ENCODE measurements at regions of chr3 and their contacts with region 1.

Region 1: DNA sequence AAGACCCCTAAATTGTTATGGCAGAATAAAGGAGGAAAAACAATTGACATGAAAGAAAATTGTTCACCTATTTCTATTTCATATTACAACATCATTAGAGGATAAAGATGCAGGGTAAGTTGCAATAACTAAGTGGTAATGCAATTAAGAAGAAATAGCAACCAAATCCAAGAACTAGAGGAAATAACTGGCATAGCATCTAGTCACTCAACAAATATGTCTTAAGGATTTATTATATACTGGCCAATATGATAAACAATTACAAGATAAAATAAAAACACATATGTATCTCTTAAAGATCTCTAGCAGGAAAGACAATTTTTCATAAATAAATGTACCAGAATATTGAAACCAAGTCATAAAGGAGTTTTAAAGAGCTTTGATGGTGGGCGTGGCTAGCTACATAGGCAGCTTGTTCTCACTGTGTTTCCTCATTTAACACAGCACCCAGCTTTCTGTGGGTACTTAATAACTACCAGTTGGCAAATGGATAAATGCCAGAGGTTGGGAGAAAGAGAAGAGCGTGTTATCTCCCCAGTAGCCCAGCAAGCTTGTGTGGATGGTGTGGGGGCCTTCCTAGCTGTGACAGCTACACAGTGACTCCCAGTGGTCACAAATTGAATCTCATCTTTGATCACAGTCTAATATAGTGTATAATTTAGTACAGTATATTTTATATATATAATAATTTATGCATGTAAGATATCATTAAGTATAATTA is 983.9 kb downstream of the EPHA3 start:
- DNase-seq: no peak
- ATAC-seq: no peak
- H3K4me3 Mint-ChIP-seq: no peak overlapping the region
- H3K27ac Mint-ChIP-seq: no peak overlapping the region
- H3K4me1 Mint-ChIP-seq: no peaks in the 10 kb centered on the region
- H3K27me3 Mint-ChIP-seq: no peaks in the 10 kb centered on the region
- CTCF ChIP-seq: no peak

Region 2: DNA sequence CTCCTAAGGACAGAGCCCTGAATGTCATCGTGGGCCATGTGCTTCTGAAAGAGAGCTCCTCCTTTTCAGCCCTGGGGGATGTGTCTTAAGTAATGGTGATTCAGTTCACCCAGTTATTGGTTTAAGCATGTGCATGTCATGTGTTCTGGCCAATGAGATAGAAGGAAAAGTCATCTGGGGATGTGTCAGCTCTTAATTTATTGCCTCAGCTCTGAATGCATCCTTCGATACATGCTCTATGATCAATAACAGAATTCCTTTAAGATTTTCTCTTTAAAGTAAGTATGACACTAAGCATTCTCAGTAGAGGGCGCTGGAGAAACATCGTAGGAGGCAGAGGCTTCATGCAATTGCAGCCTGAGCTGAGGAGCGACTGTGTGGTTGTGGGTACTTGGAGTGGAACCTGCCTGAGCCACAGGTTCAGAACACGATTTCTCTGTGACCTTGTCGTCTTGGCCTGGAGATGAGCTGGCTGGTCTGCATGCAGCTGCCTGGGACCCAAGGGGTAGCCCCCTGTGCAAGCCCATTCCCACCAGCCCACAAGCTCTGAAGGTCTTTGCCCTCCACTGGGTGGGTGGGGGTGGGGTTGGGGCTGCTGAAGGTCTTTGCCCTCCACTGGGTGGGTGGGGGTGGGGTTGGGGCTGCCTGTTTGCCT is 1872.1 kb before region 1 on chr3:
- CTCF ChIA-PET with region 1: interaction called, 5 read pairs
- POLR2A ChIA-PET with region 1: no interaction called
- intact Hi-C with region 1: loop called (anchors 5 kb)
- DNase-seq: no peak
- ATAC-seq: peak; percentile 64
- H3K4me3 Mint-ChIP-seq: no peak overlapping the region
- H3K27ac Mint-ChIP-seq: no peak overlapping the region
- H3K4me1 Mint-ChIP-seq: peaks cover 5% of the 10 kb centered on the region
- H3K27me3 Mint-ChIP-seq: peaks cover 2% of the 10 kb centered on the region
- CTCF ChIP-seq: no peak

Region 3: DNA sequence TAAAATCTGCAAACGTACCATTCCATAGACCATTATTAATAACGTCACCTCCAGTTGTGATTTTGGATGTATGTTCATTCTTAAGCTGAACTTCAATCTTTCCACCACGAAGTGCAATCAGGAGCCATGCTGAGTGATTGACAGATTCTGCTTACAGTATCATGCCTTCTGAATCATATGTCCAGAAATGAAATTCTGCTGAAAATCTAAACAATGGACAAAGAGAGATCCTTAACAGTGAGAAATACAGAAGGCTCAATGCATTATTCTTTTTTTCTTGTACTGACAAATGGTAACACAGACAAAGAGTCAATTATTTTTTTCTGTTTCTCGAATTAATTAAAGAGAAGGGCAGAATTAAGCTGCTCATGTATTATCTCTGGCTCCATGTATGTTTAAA is 130.5 kb after region 1 on chr3:
- CTCF ChIA-PET with region 1: no interaction called
- POLR2A ChIA-PET with region 1: no interaction called
- intact Hi-C with region 1: no loop called
- DNase-seq: no peak
- ATAC-seq: no peak
- H3K4me3 Mint-ChIP-seq: no peak overlapping the region
- H3K27ac Mint-ChIP-seq: no peak overlapping the region
- H3K4me1 Mint-ChIP-seq: no peaks in the 10 kb centered on the region
- H3K27me3 Mint-ChIP-seq: no peaks in the 10 kb centered on the region
- CTCF ChIP-seq: no peak